ENCODE measurements at regions of chr15 and their contacts with region 1.

Region 1: DNA sequence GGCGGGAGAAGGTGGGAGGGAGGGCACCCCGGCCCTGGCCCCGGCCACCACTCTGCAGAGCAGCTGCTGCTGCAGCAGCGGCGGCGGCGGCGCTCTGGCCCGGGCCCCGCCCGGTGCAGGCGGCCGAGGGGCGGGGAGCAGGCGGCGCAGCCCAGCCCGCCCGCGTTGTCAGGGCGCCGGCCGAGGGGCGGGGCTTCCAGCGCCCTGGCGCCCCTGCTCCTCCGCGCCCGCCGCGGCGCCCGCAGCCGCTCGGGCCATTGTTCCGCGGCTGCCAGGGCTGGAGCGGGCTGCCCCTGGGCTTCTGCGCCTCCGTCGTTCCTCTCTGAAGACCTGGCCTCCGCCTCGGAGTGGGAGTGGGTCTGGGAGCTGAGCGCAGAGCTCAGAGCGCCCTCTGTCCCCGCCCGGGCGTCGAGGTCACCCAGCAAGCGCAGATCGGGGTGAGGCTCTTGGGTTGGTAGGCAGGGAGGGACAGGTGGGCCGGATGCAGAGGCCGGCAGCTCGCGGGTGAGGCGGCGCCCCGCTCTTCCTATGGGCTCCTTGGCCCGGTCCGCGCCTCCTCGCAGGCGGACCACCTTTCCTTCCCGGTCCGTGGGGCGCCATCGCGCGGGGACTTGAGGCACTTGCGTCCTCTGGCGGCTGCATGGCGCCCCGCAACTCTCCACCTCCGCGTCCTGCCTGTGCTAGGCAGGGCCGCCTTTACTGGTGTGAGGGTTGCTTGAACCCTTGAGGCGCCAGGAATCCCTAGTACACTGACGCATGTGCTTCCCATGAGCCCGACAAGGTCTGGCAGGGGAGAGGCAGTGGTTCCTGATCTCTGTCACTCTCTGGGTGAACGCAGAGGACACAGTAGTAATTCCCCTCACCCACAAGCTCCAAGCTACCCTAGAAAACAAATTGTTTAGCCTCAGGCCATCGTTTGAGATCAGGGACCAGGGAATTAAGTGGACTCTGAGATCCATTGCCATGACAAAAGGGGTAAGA is at the start of gene LPCAT4:
- DNase-seq: peak; percentile 88 to 89
- ATAC-seq: peak; percentile 86 to 97 (median 92)
- H3K4me3 ChIP-seq: peak within 1 kb of the TSS; percentile 82 to 100 (median 95)
- H3K27ac ChIP-seq: peak within 1 kb of the TSS; percentile 97 to 100 (median 99)
- H3K4me1 ChIP-seq: peaks cover 0 to 26% (median 23%) of the 10 kb centered on the region in 9 donors
- H3K27me3 ChIP-seq: no peaks in the 10 kb centered on the region
- CTCF ChIP-seq: peak; percentile 90 to 100 (median 96)
- total RNA-seq, gene LPCAT4: 22.8 to 110 (median 50.6) TPM

Region 2: DNA sequence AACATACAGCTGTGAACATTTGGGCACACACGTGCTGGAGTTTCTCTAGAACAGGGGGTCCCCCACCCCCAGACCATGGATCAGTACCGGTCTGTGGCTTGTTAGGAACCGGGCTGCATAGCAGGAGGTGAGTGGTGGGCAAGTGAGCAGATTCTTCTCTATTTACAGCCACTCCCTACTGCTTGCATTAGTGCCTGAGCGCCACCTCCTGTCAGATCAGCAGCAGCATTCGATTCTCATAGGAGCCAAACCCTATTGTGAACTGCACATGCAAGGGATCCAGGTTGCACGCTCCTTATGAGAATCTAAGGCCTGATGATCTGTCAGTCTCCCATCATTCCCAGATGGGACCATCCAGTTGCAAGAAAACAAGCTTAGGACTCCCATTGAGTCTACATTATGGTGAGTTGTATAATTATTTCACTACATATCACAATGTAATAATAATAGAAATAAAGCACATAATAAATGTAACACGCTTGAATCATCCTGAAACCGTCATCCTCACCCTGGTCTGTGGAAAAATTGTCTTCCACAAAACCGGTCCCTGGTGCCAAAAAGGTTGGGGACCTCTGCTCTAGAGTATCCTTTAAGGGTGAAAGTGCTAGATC is 373.3 kb before region 1 on chr15:
- intact Hi-C with region 1: no loop called
- DNase-seq: no peak
- ATAC-seq: no peak
- H3K4me3 ChIP-seq: no peak overlapping the region
- H3K27ac ChIP-seq: no peak overlapping the region
- H3K4me1 ChIP-seq: peaks cover 0 to 4% (median 0%) of the 10 kb centered on the region in 9 donors
- H3K27me3 ChIP-seq: no peaks in the 10 kb centered on the region
- CTCF ChIP-seq: peak in 4 of 9 donors; percentile 15 to 33 (median 26)

Region 3: GRCh38 chr15:34065941-34066340 is 301.4 kb before region 1 on chr15:
- intact Hi-C with region 1: loop called in 2 of 10 experiments (anchors 2 to 5 kb)
- DNase-seq: no peak
- ATAC-seq: no peak
- H3K4me3 ChIP-seq: no peak overlapping the region
- H3K27ac ChIP-seq: no peak overlapping the region
- H3K4me1 ChIP-seq: peaks cover 0 to 6% (median 0%) of the 10 kb centered on the region in 9 donors
- H3K27me3 ChIP-seq: no peaks in the 10 kb centered on the region
- CTCF ChIP-seq: no peak

Region 4: DNA sequence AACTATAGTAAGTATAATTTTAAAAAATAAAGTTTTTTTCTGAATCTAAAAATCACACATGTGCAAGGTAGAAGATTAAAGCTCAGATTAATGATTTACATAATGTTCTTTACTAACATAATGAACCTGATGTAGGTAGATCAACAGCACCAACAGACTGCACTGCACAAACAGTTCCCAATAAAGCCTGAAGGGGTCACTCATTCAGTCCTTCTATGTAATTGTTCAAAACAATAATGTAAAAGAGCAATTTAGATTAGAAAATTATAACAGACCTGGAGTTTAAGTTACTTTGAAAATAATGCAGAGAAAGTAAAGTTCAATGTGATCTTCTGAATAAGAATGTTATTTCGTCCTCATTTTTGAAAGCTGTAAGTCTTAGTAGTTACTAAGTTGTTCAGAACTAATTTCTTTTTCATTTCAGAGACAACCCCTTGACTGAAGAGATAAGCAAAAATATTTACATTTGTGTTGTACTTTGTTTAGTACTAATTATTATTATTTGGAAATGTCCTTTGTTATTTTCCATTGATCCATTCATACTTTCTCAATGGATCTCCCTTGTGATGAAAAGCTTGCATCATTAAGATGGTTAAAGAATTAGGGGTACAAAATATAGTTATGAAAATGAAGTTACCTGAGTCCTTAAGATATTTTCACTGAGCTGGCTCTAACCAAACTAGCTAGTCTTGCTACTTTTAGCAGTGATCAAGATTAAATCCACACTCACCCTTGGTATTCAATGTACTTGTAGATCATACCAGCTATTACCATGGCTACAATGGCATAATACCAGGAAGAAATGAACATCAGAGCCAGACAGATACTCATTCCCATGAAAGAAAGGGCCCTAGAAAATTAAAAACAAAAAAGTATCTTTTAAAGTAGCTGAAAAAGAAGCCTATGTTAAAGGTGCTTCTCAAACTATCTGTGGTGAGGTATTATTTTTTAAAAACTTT is 125.7 kb before region 1 on chr15:
- intact Hi-C with region 1: loop called in 9 of 10 experiments (anchors 1 to 10 kb)
- DNase-seq: no peak
- ATAC-seq: peak in 3 of 8 donors; percentile 56 to 64 (median 61)
- H3K4me3 ChIP-seq: no peak overlapping the region
- H3K27ac ChIP-seq: no peak overlapping the region
- H3K4me1 ChIP-seq: peaks cover 0 to 6% (median 0%) of the 10 kb centered on the region in 9 donors
- H3K27me3 ChIP-seq: no peaks in the 10 kb centered on the region
- CTCF ChIP-seq: peak; percentile 52 to 85 (median 79)

Region 5: DNA sequence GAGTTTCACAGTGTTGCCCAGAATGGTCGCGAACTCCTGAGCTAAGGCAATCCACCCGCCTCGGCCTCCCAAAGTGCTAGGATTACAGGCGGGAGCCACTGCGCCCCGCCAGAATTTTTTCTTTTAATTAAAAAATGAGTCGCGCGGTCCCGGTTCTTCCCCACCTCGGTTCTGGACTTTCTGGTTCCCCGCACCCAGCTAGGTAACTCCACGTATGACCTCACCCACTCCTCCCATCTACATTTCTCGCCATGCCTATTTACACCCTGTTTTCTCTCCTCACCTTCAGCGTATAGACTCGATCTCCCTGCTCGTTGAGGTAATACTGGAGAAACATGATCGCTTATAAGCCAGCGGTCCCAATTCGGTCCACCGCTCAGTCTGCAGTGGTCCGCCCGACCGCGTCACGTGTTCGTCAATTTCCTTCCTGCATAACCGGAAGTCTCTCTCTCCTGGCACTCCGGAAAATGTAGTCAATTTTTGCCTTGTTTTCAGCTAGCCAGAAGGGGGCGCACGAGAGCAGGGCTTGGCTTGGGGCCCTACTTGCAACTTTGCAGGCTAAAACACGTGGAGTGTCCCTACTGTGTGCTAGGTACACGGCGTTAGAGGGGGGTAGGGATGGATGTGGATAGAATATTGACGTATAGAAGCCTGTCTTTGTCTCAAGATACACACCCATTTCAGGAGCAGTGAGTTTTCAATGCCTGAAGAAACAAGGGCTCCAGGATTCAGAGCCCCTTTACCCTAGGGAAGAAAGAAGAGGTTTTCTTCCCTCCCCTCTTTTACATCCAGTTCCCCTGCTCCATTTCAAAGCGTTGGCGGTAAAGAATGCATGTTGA is 24.4 kb before region 1 on chr15 and contains the starts of genes NOP10 and NUTM1:
- intact Hi-C with region 1: loop called in 7 of 10 experiments (anchors 1 to 2 kb)
- DNase-seq: peak; percentile 92 to 93
- ATAC-seq: peak; percentile 91 to 97 (median 96)
- H3K4me3 ChIP-seq: peak within 1 kb of the TSS; percentile 56 to 92 (median 76)
- H3K27ac ChIP-seq: peak within 1 kb of the TSS; percentile 14 to 94 (median 92)
- H3K4me1 ChIP-seq: peaks cover 0 to 45% (median 19%) of the 10 kb centered on the region in 9 donors
- H3K27me3 ChIP-seq: no peaks in the 10 kb centered on the region
- CTCF ChIP-seq: peak; percentile 92 to 97 (median 96)
- total RNA-seq, gene NOP10: 92.3 to 159 (median 119) TPM
- total RNA-seq, gene NUTM1: not detected

Region 6: GRCh38 chr15:34437687-34438086 is 70.3 kb after region 1 on chr15 and contains the start of gene GOLGA8A:
- intact Hi-C with region 1: no loop called
- DNase-seq: peak; percentile 56 to 81
- ATAC-seq: peak in 6 of 8 donors; percentile 44 to 73 (median 62)
- H3K4me3 ChIP-seq: peak within 1 kb of the TSS; percentile 9 to 68 (median 64)
- H3K27ac ChIP-seq: peak within 1 kb of the TSS in 5 of 10 donors; percentile 28 to 65 (median 58)
- H3K4me1 ChIP-seq: peaks cover 0 to 22% (median 6%) of the 10 kb centered on the region in 9 donors
- H3K27me3 ChIP-seq: peaks cover 0 to 41% (median 0%) of the 10 kb centered on the region in 7 donors
- CTCF ChIP-seq: no peak
- total RNA-seq, gene GOLGA8A: 7.6 to 20.5 (median 11.5) TPM

Region 7: DNA sequence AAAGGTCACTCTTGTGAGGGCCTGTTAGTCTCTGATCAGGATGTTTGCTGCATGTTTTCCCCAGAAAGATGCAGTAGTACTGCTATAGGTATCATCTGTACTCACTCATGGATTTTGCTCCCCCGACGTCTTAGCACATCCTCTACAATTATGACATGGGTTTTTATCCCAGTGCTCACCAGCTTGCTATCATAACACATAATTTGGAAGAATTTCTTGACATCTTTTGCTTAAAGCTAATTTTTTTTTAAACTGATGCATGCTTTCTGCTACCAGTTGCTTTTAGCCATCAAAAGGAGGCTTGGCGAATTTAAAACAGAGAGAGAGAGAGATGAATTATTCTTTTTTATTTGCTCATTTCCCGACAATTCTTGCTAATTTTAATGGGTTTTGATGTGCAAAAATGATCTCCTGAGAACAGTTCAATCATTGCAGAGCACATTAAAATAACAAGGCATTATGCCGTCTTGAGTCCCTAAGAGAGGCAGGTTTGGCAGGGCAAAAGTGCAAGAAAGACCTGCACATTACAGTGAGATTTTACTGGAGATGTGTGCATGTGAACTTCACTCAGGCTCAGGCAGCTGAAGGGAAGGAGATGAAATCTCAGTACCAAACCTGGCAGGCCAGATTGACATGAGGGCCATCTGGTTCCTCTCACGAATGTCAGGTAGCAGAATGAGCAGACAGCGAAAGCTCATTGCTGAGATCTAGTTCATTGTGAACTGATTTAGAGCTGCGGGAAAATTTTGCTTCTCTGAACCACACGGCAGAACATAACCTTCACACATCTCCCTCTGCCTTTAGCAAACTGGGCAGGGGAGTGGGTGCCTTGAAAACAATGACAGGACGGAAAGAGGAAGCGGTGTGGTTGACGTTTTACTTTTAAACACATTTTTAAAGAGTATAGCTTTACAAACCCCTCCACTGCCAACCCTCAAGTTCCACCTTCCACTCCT is 242.0 kb after region 1 on chr15:
- intact Hi-C with region 1: no loop called
- DNase-seq: no peak
- ATAC-seq: peak in 6 of 8 donors; percentile 47 to 78 (median 54)
- H3K4me3 ChIP-seq: peak overlapping the region in 1 of 10 donors; percentile 11
- H3K27ac ChIP-seq: peak overlapping the region in 5 of 10 donors; percentile 24 to 63 (median 56)
- H3K4me1 ChIP-seq: peaks cover 0 to 21% (median 16%) of the 10 kb centered on the region in 9 donors
- H3K27me3 ChIP-seq: peaks cover 0 to 46% (median 0%) of the 10 kb centered on the region in 7 donors
- CTCF ChIP-seq: no peak

Region 8: GRCh38 chr15:34969340-34970097 is 602.1 kb after region 1 on chr15 and contains the start of gene AQR:
- intact Hi-C with region 1: loop called in 1 of 10 experiments (anchors 5 kb)
- DNase-seq: peak; percentile 92 to 96
- ATAC-seq: peak; percentile 99 to 100 (median 100)
- H3K4me3 ChIP-seq: peak within 1 kb of the TSS; percentile 62 to 100 (median 81)
- H3K27ac ChIP-seq: peak within 1 kb of the TSS; percentile 8 to 91 (median 86)
- H3K4me1 ChIP-seq: peaks cover 0 to 56% (median 34%) of the 10 kb centered on the region in 9 donors
- H3K27me3 ChIP-seq: no peaks in the 10 kb centered on the region
- CTCF ChIP-seq: peak; percentile 60 to 97 (median 82)
- total RNA-seq, gene AQR: 9.4 to 14.6 (median 10.8) TPM

Measured in heart right ventricle (tissue), 16 donors.